CD8-positive, alpha-beta memory T cell (primary cell): ENCODE measurements at regions of chr17 and their contacts with region 1.

Region 1: GRCh38 chr17:3913531-3914311 is 2.5 kb downstream of the P2RX1 start:
- DNase-seq: peak; percentile 71 to 85 (median 72)
- H3K4me3 ChIP-seq: no peak overlapping the region
- H3K4me3 Mint-ChIP-seq: peak overlapping the region in 2 of 7 donors; percentile 9 to 55
- H3K27ac ChIP-seq: peak overlapping the region; percentile 1
- H3K27ac Mint-ChIP-seq: peak overlapping the region; percentile 7 to 93 (median 64)
- H3K4me1 ChIP-seq: peaks cover 54% of the 10 kb centered on the region
- H3K4me1 Mint-ChIP-seq: peaks cover 40 to 51% (median 45%) of the 10 kb centered on the region in 3 donors
- H3K27me3 ChIP-seq: no peaks in the 10 kb centered on the region
- H3K27me3 Mint-ChIP-seq: no peaks in the 10 kb centered on the region

Region 2: DNA sequence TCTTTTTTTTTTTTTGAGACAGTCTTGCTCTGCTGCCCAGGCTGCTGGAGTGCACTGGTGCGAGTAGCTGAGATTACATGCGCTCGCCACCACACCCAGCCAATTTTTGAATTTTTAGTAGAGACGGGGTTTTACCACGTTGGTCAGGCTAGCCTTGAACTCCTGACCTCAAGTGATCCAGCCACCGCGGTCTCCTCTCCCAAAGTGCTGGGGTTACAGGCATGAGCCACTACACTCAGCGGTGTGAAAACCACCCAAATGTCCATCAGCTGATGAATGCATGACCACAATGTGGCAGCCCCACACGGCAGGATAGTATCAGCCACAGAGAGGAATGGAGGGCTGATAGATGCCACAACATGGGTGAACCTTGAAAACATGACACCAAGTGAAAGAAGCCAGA is 219.9 kb before region 1 on chr17:
- CTCF ChIA-PET with region 1: no interaction called
- POLR2A ChIA-PET with region 1: interaction called, 17 read pairs
- DNase-seq: peak in 2 of 5 donors; percentile 32 to 48
- H3K4me3 ChIP-seq: no peak overlapping the region
- H3K4me3 Mint-ChIP-seq: peak overlapping the region; percentile 35 to 96 (median 92)
- H3K27ac ChIP-seq: no peak overlapping the region
- H3K27ac Mint-ChIP-seq: peak overlapping the region; percentile 48 to 92 (median 76)
- H3K4me1 ChIP-seq: peaks cover 16% of the 10 kb centered on the region
- H3K4me1 Mint-ChIP-seq: peaks cover 21 to 37% (median 28%) of the 10 kb centered on the region in 3 donors
- H3K27me3 ChIP-seq: no peaks in the 10 kb centered on the region
- H3K27me3 Mint-ChIP-seq: no peaks in the 10 kb centered on the region

Region 3: DNA sequence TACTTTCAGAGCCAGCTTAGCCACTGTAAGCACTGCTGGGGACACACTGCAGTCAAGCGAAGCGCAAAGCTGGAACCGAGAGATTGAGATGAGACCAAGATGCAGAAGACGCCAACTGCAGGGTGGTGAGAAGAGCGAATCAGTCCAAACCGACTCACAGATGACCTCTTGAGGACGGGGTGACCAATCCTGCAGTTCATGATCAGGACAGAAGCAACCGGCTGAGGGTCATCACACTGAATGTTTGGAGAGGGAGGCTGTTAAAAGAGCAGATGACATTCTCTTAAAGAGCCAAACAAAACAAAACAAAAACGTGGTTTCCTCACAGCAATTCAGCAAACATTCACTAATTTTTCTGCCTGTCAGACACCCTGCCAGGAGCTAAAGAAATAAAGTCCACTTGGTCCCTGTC is 181.5 kb before region 1 on chr17:
- CTCF ChIA-PET with region 1: no interaction called
- POLR2A ChIA-PET with region 1: no interaction called
- DNase-seq: no peak
- H3K4me3 ChIP-seq: no peak overlapping the region
- H3K4me3 Mint-ChIP-seq: no peak overlapping the region
- H3K27ac ChIP-seq: no peak overlapping the region
- H3K27ac Mint-ChIP-seq: no peak overlapping the region
- H3K4me1 ChIP-seq: no peaks in the 10 kb centered on the region
- H3K4me1 Mint-ChIP-seq: peaks cover 0 to under 1% (median 0%) of the 10 kb centered on the region in 3 donors
- H3K27me3 ChIP-seq: no peaks in the 10 kb centered on the region
- H3K27me3 Mint-ChIP-seq: peaks cover 0 to 2% of the 10 kb centered on the region in 2 donors

Region 4: DNA sequence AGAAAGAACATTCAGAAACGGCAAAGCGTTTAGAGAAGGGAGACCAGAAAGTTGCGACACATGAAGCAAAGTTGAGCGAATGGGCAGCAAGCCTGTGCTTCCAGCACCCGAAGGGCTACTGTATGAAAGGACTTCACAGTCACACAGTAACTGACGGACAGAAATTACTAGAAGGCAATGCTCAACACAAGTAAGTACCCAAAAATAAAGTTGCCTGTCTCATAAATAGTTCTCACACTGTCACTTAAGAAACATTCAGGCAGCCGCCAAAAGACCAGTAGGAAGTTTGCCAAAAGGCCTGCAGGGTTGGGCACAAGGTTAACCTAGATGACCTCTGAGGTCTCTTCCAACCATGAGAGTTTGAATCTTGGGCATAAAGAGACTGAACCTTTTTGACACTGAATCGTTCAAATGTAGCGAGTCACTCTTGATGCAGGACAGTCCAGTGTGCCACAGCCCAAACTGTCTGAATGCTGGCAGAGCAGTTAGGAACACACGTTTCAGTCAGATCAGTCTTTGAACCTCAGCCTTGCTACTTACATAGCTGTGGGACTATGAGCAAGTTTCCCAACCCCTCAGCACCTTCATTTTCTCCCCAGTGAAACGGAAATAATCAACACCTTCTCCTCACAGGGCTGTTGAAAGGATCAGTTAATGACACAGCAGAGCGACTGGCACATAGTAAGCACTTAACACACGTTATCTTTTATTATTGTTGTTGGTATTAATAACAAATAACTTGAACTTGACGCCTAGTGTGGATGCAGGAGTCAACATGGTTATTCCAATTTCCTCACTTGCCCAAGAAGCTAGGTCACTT is 78.1 kb before region 1 on chr17:
- CTCF ChIA-PET with region 1: no interaction called
- POLR2A ChIA-PET with region 1: no interaction called
- DNase-seq: no peak
- H3K4me3 ChIP-seq: no peak overlapping the region
- H3K4me3 Mint-ChIP-seq: no peak overlapping the region
- H3K27ac ChIP-seq: no peak overlapping the region
- H3K27ac Mint-ChIP-seq: peak overlapping the region in 2 of 8 donors; percentile 14 to 20
- H3K4me1 ChIP-seq: no peaks in the 10 kb centered on the region
- H3K4me1 Mint-ChIP-seq: peaks cover 11 to 37% (median 30%) of the 10 kb centered on the region in 3 donors
- H3K27me3 ChIP-seq: no peaks in the 10 kb centered on the region
- H3K27me3 Mint-ChIP-seq: no peaks in the 10 kb centered on the region

Region 5: GRCh38 chr17:3893003-3893719 is 20.6 kb before region 1 on chr17 and contains the start of gene CAMKK1:
- CTCF ChIA-PET with region 1: interaction called, 11 read pairs
- POLR2A ChIA-PET with region 1: no interaction called
- DNase-seq: peak; percentile 85 to 89 (median 87)
- H3K4me3 ChIP-seq: peak within 1 kb of the TSS; percentile 58
- H3K4me3 Mint-ChIP-seq: peak within 1 kb of the TSS; percentile 82 to 90 (median 86)
- H3K27ac ChIP-seq: no peak within 1 kb of the TSS
- H3K27ac Mint-ChIP-seq: peak within 1 kb of the TSS; percentile 77 to 94 (median 89)
- H3K4me1 ChIP-seq: peaks cover 20% of the 10 kb centered on the region
- H3K4me1 Mint-ChIP-seq: peaks cover 18 to 29% (median 19%) of the 10 kb centered on the region in 3 donors
- H3K27me3 ChIP-seq: no peaks in the 10 kb centered on the region
- H3K27me3 Mint-ChIP-seq: no peaks in the 10 kb centered on the region
- total RNA-seq, gene CAMKK1: 2.3 to 2.7 TPM

Region 6: DNA sequence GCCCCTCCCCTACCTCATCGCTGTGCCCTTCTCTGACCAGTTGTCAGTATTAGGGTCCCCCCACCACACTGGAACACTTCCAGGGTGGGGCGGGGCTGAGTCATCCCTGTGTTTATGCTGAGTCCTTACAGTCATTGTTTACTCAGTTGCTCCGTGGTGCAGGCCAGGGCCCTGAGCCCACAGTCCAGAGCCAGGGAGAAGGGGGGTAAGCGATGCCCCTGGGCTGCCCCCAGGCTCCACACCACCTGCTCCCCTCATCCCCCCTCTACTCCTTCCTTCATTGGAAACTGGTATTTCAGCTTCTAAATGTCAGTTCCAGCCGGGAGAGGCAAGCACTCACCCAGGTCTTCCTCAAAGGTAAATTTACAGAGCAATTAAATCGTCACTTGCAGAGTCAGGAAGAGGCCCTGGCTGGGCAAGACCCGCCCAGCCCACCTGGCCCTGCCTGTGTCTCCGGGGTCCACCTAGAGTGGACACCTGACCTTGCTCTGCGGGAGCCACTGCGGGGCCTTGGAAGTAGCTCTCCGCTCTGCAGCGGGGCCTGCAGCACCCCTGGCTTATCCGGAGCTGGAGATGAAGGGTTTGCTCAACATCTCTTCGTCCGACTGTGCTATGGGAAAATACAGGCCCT is 45.7 kb after region 1 on chr17:
- CTCF ChIA-PET with region 1: interaction called, 17 read pairs
- POLR2A ChIA-PET with region 1: no interaction called
- DNase-seq: no peak
- H3K4me3 ChIP-seq: no peak overlapping the region
- H3K4me3 Mint-ChIP-seq: peak overlapping the region in 4 of 7 donors; percentile 34 to 56 (median 44)
- H3K27ac ChIP-seq: peak overlapping the region; percentile 41
- H3K27ac Mint-ChIP-seq: peak overlapping the region; percentile 66 to 98 (median 86)
- H3K4me1 ChIP-seq: peaks cover 60% of the 10 kb centered on the region
- H3K4me1 Mint-ChIP-seq: peaks cover 65 to 75% (median 69%) of the 10 kb centered on the region in 3 donors
- H3K27me3 ChIP-seq: no peaks in the 10 kb centered on the region
- H3K27me3 Mint-ChIP-seq: no peaks in the 10 kb centered on the region

Region 7: GRCh38 chr17:3965118-3965803 is 51.5 kb after region 1 on chr17:
- CTCF ChIA-PET with region 1: interaction called, 17 read pairs
- POLR2A ChIA-PET with region 1: interaction called, 3 read pairs
- DNase-seq: peak; percentile 53 to 78 (median 63)
- H3K4me3 ChIP-seq: peak overlapping the region; percentile 78
- H3K4me3 Mint-ChIP-seq: peak overlapping the region; percentile 93 to 97 (median 95)
- H3K27ac ChIP-seq: peak overlapping the region; percentile 84
- H3K27ac Mint-ChIP-seq: peak overlapping the region; percentile 88 to 98 (median 97)
- H3K4me1 ChIP-seq: peaks cover 37% of the 10 kb centered on the region
- H3K4me1 Mint-ChIP-seq: peaks cover 39 to 48% (median 47%) of the 10 kb centered on the region in 3 donors
- H3K27me3 ChIP-seq: no peaks in the 10 kb centered on the region
- H3K27me3 Mint-ChIP-seq: no peaks in the 10 kb centered on the region

Region 8: GRCh38 chr17:4004517-4005295 is 91.0 kb after region 1 on chr17:
- CTCF ChIA-PET with region 1: interaction called, 61 read pairs
- POLR2A ChIA-PET with region 1: no interaction called
- DNase-seq: peak; percentile 42 to 63 (median 46)
- H3K4me3 ChIP-seq: no peak overlapping the region
- H3K4me3 Mint-ChIP-seq: no peak overlapping the region
- H3K27ac ChIP-seq: no peak overlapping the region
- H3K27ac Mint-ChIP-seq: peak overlapping the region in 2 of 8 donors; percentile 89 to 97
- H3K4me1 ChIP-seq: peaks cover 6% of the 10 kb centered on the region
- H3K4me1 Mint-ChIP-seq: peaks cover 2 to 10% (median 7%) of the 10 kb centered on the region in 3 donors
- H3K27me3 ChIP-seq: no peaks in the 10 kb centered on the region
- H3K27me3 Mint-ChIP-seq: no peaks in the 10 kb centered on the region

Region 9: GRCh38 chr17:4074831-4075495 is 161.2 kb after region 1 on chr17:
- CTCF ChIA-PET with region 1: interaction called, 30 read pairs
- POLR2A ChIA-PET with region 1: no interaction called
- DNase-seq: peak in 2 of 5 donors; percentile 29 to 32
- H3K4me3 ChIP-seq: no peak overlapping the region
- H3K4me3 Mint-ChIP-seq: no peak overlapping the region
- H3K27ac ChIP-seq: no peak overlapping the region
- H3K27ac Mint-ChIP-seq: peak overlapping the region in 5 of 8 donors; percentile 3 to 78 (median 64)
- H3K4me1 ChIP-seq: no peaks in the 10 kb centered on the region
- H3K4me1 Mint-ChIP-seq: peaks cover 2 to 7% (median 5%) of the 10 kb centered on the region in 3 donors
- H3K27me3 ChIP-seq: no peaks in the 10 kb centered on the region
- H3K27me3 Mint-ChIP-seq: no peaks in the 10 kb centered on the region